CD4-positive, alpha-beta memory T cell (primary cell): ENCODE measurements at regions of chr13 and their contacts with region 1.

Region 1: GRCh38 chr13:49996951-49997895 is at the start of gene TRIM13:
- DNase-seq: peak; percentile 81 to 85 (median 84)
- H3K4me3 ChIP-seq: peak within 1 kb of the TSS; percentile 82 to 96
- H3K4me3 Mint-ChIP-seq: peak within 1 kb of the TSS; percentile 89 to 94 (median 90)
- H3K27ac ChIP-seq: peak within 1 kb of the TSS; percentile 83
- H3K27ac Mint-ChIP-seq: peak within 1 kb of the TSS; percentile 84 to 93 (median 91)
- H3K4me1 ChIP-seq: peaks cover 59% of the 10 kb centered on the region
- H3K4me1 Mint-ChIP-seq: peaks cover 30 to 63% (median 43%) of the 10 kb centered on the region in 4 donors
- H3K27me3 ChIP-seq: no peaks in the 10 kb centered on the region
- H3K27me3 Mint-ChIP-seq: no peaks in the 10 kb centered on the region
- total RNA-seq, gene TRIM13: 30.3 to 32.4 TPM

Region 2: GRCh38 chr13:49976314-49977258 is 20.6 kb before region 1 on chr13:
- CTCF ChIA-PET with region 1: interaction called, 33 read pairs
- POLR2A ChIA-PET with region 1: interaction called, 18 read pairs
- intact Hi-C with region 1: loop called (anchors 1 kb)
- DNase-seq: peak; percentile 68 to 75 (median 71)
- H3K4me3 ChIP-seq: no peak overlapping the region
- H3K4me3 Mint-ChIP-seq: no peak overlapping the region
- H3K27ac ChIP-seq: no peak overlapping the region
- H3K27ac Mint-ChIP-seq: no peak overlapping the region
- H3K4me1 ChIP-seq: no peaks in the 10 kb centered on the region
- H3K4me1 Mint-ChIP-seq: peaks cover 0 to 5% (median 3%) of the 10 kb centered on the region in 4 donors
- H3K27me3 ChIP-seq: no peaks in the 10 kb centered on the region
- H3K27me3 Mint-ChIP-seq: no peaks in the 10 kb centered on the region

Region 3: GRCh38 chr13:50171590-50172282 is 174.5 kb after region 1 on chr13:
- CTCF ChIA-PET with region 1: no interaction called
- POLR2A ChIA-PET with region 1: no interaction called
- intact Hi-C with region 1: no loop called
- DNase-seq: no peak
- H3K4me3 ChIP-seq: no peak overlapping the region
- H3K4me3 Mint-ChIP-seq: no peak overlapping the region
- H3K27ac ChIP-seq: no peak overlapping the region
- H3K27ac Mint-ChIP-seq: peak overlapping the region in 1 of 7 donors; percentile 47
- H3K4me1 ChIP-seq: no peaks in the 10 kb centered on the region
- H3K4me1 Mint-ChIP-seq: peaks cover 0 to 7% (median under 1%) of the 10 kb centered on the region in 4 donors
- H3K27me3 ChIP-seq: no peaks in the 10 kb centered on the region
- H3K27me3 Mint-ChIP-seq: no peaks in the 10 kb centered on the region

Region 4: GRCh38 chr13:50236898-50237318 is 239.7 kb after region 1 on chr13:
- CTCF ChIA-PET with region 1: interaction called, 13 read pairs
- POLR2A ChIA-PET with region 1: interaction called, 12 read pairs
- intact Hi-C with region 1: loop called (anchors 10 kb)
- DNase-seq: peak; percentile 52 to 74 (median 56)
- H3K4me3 ChIP-seq: peak overlapping the region in 1 of 2 donors; percentile 55
- H3K4me3 Mint-ChIP-seq: peak overlapping the region; percentile 76 to 93 (median 86)
- H3K27ac ChIP-seq: peak overlapping the region; percentile 77
- H3K27ac Mint-ChIP-seq: peak overlapping the region; percentile 83 to 97 (median 95)
- H3K4me1 ChIP-seq: peaks cover 39% of the 10 kb centered on the region
- H3K4me1 Mint-ChIP-seq: peaks cover 32 to 52% (median 37%) of the 10 kb centered on the region in 4 donors
- H3K27me3 ChIP-seq: no peaks in the 10 kb centered on the region
- H3K27me3 Mint-ChIP-seq: no peaks in the 10 kb centered on the region

Region 5: DNA sequence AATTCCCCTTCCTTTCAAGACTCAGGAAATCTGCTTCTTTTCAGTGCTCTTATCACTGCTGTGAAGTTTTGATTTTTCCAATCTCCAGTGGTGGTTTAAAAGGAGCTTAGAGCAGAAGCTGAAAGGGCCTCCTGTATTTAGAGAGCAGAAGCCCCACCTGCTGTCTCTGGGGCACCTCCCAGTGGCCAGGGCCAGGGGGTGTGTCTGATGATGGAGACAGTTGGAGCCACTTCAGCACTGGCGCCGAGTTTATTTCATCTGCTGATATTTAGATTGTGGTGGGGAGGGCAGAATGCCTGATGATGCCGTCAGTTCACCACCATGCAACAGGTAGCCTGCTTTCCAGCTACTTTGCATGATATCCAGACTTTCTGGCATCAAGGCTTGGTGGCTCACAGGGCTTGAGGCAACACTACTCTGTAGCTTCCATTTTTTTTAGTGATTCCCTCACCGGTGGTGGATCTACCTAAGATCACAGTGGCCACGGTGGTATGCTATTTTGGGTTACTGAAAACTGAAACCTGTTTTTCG is 389.9 kb after region 1 on chr13:
- CTCF ChIA-PET with region 1: interaction called, 8 read pairs
- POLR2A ChIA-PET with region 1: no interaction called
- intact Hi-C with region 1: loop called (anchors 1 kb)
- DNase-seq: peak in 4 of 5 donors; percentile 15 to 34 (median 26)
- H3K4me3 ChIP-seq: no peak overlapping the region
- H3K4me3 Mint-ChIP-seq: peak overlapping the region in 1 of 8 donors; percentile 18
- H3K27ac ChIP-seq: no peak overlapping the region
- H3K27ac Mint-ChIP-seq: peak overlapping the region in 1 of 7 donors; percentile 43
- H3K4me1 ChIP-seq: peaks cover 19% of the 10 kb centered on the region
- H3K4me1 Mint-ChIP-seq: peaks cover 6 to 27% (median 22%) of the 10 kb centered on the region in 4 donors
- H3K27me3 ChIP-seq: no peaks in the 10 kb centered on the region
- H3K27me3 Mint-ChIP-seq: peaks cover 0 to 2% of the 10 kb centered on the region in 2 donors

Region 6: GRCh38 chr13:50893211-50893852 is 896.1 kb after region 1 on chr13:
- CTCF ChIA-PET with region 1: interaction called, 22 read pairs
- POLR2A ChIA-PET with region 1: interaction called, 29 read pairs
- intact Hi-C with region 1: loop called (anchors 5 kb)
- DNase-seq: peak; percentile 43 to 71 (median 59)
- H3K4me3 ChIP-seq: peak overlapping the region; percentile 42 to 50
- H3K4me3 Mint-ChIP-seq: peak overlapping the region; percentile 69 to 85 (median 82)
- H3K27ac ChIP-seq: peak overlapping the region; percentile 69
- H3K27ac Mint-ChIP-seq: peak overlapping the region; percentile 78 to 97 (median 95)
- H3K4me1 ChIP-seq: peaks cover 45% of the 10 kb centered on the region
- H3K4me1 Mint-ChIP-seq: peaks cover 35 to 46% (median 39%) of the 10 kb centered on the region in 4 donors
- H3K27me3 ChIP-seq: no peaks in the 10 kb centered on the region
- H3K27me3 Mint-ChIP-seq: peaks cover 0 to 2% of the 10 kb centered on the region in 2 donors